Sciatic nerve (tissue), 2 donors: ENCODE measurements at regions of chr14 and their contacts with region 1.

Region 1: GRCh38 chr14:76710056-76711010 is 50.9 kb upstream of the VASH1 start:
- DNase-seq: no peak
- ATAC-seq: peak; percentile 76

Region 2: GRCh38 chr14:76784266-76785264 is 74.2 kb after region 1 on chr14:
- intact Hi-C with region 1: loop called (anchors 10 kb)
- DNase-seq: peak; percentile 87
- ATAC-seq: peak; percentile 91